Mammary epithelial cell (primary cell): ENCODE measurements at regions of chr15 and their contacts with region 1.

Region 1: DNA sequence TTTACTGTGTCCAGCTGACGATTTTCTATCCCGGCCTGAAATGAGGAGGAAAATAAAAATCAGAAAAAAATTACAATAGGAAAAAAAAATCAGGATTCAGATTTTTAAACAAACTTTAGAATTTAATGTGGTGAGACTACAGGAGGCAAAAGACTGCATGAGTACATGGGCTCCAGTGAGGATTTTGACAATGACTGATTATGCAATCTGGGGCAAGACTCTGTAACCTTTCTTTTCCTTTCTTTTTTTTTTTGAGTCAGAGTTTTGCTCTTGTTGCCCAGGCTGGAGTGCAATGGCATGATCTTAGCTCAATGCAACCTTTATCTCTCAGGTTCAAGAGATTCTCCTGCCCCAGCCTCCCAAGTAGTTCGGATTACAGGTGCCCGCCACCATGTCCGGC is 29.9 kb downstream of the SPG11 start:
- DNase-seq: peak; percentile 59
- H3K4me3 ChIP-seq: no peak overlapping the region
- H3K27ac ChIP-seq: peak overlapping the region; percentile 40
- H3K4me1 ChIP-seq: no peaks in the 10 kb centered on the region
- H3K27me3 ChIP-seq: no peaks in the 10 kb centered on the region
- CTCF ChIP-seq: no peak

Region 2: DNA sequence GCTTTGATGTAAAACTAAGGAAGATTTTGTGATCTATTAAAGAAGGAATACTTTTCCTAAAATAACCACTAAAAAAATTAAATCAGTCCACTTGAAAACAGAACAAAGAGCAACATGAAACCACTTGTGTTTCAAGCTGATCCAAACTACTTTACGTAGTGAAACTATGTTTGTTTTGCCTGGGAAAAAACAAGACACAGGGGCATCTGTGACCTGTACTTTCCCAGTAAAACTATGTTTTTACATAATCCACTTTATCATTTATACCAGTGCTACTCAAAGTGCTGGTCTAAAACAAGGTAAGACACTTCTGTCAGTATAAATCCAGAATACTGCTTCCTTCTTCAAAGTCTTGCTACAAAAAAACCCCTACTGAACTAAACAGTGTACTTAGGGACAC is 26.9 kb before region 1 on chr15:
- CTCF ChIA-PET with region 1: no interaction called
- dilution Hi-C with region 1: no loop called
- in situ Hi-C with region 1: no loop called
- intact Hi-C with region 1: no loop called
- DNase-seq: no peak
- H3K4me3 ChIP-seq: no peak overlapping the region
- H3K27ac ChIP-seq: no peak overlapping the region
- H3K4me1 ChIP-seq: no peaks in the 10 kb centered on the region
- H3K27me3 ChIP-seq: no peaks in the 10 kb centered on the region
- CTCF ChIP-seq: no peak

Region 3: DNA sequence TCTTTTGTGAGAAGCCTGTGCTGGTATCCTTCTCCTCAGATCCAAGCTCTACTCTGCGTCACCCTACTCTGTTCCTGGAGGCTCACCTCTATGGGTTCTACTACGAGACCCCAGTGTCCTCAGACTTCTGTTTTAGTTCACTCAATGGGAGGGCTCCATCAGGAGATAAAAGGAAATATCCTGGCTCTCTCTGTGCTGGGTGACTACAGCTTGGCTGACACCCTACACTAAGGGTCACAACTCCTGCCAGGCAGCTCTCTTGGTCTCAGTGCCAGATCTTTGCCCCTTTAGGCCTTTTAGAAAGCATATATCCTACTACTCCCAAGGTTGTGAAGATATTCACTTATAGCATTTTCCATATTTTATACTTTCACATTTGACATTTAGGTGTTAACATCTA is 16.6 kb before region 1 on chr15:
- CTCF ChIA-PET with region 1: interaction called, 20 read pairs
- dilution Hi-C with region 1: no loop called
- in situ Hi-C with region 1: no loop called
- intact Hi-C with region 1: no loop called
- DNase-seq: no peak
- H3K4me3 ChIP-seq: no peak overlapping the region
- H3K27ac ChIP-seq: no peak overlapping the region
- H3K4me1 ChIP-seq: no peaks in the 10 kb centered on the region
- H3K27me3 ChIP-seq: no peaks in the 10 kb centered on the region
- CTCF ChIP-seq: no peak

Region 4: DNA sequence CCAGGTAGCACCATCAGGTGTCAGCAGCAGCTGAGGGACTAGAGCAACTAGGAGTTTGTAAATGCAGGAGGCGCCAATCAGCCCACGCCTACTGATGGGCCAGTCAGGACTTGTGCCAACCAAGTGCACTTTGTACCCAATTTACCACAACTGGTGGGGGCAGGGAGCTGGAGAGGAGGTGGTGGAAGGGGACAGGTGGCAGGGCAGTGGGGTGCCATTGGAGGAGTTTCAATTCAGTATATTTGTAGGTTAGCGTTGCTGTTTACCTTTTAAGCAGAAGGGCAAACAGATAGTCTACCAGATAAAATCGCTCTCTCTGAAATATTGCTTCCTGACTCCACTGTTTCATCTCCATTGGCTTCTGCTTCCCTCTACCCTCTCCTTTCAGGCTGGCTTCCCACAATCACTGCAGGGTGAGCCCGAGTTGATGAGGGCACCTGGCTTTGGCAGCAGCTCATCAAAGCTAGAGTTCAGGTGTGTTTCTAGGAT is 178.5 kb after region 1 on chr15:
- CTCF ChIA-PET with region 1: no interaction called
- dilution Hi-C with region 1: no loop called
- in situ Hi-C with region 1: no loop called
- intact Hi-C with region 1: no loop called
- DNase-seq: peak; percentile 37
- H3K4me3 ChIP-seq: no peak overlapping the region
- H3K27ac ChIP-seq: no peak overlapping the region
- H3K4me1 ChIP-seq: peaks cover 13% of the 10 kb centered on the region
- H3K27me3 ChIP-seq: peaks cover 7% of the 10 kb centered on the region
- CTCF ChIP-seq: no peak